Mammary epithelial cell (primary cell): ENCODE measurements at regions of chr12 and their contacts with region 1.

Region 1: DNA sequence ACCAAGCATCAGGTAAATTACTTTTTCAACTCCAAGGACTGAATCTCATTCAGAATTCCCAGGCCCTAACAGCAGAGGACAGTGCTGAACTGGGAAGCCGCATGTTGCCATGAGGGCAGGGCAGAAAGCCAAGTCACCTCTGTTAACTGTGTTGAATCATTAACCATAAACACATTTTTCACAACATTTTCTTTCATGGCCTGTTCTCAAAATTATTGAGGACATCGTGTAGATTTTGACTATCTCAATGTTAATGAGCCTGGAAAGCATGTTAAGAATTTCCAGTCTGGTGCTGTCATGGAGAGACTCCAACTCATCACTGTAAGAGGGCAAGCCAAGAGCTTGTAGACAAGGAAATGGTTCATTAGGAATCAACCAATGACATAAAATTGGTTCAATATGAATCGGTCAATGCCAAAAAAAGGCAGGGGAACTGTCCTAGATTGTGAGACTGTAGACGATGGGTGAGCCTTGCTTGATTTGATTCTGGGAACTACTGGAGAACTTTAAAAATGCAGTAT is 33.7 kb downstream of the CPM start:
- DNase-seq: peak; percentile 67
- H3K4me3 ChIP-seq: no peak overlapping the region
- H3K27ac ChIP-seq: no peak overlapping the region
- H3K4me1 ChIP-seq: no peaks in the 10 kb centered on the region
- H3K27me3 ChIP-seq: no peaks in the 10 kb centered on the region
- CTCF ChIP-seq: peak; percentile 63 to 96

Region 2: GRCh38 chr12:68865399-68866164 is 33.7 kb before region 1 on chr12:
- CTCF ChIA-PET with region 1: no interaction called
- dilution Hi-C with region 1: no loop called
- in situ Hi-C with region 1: no loop called
- intact Hi-C with region 1: loop called (anchors 2 kb)
- DNase-seq: no peak
- H3K4me3 ChIP-seq: no peak overlapping the region
- H3K27ac ChIP-seq: no peak overlapping the region
- H3K4me1 ChIP-seq: peaks cover 6% of the 10 kb centered on the region
- H3K27me3 ChIP-seq: no peaks in the 10 kb centered on the region
- CTCF ChIP-seq: no peak

Region 3: DNA sequence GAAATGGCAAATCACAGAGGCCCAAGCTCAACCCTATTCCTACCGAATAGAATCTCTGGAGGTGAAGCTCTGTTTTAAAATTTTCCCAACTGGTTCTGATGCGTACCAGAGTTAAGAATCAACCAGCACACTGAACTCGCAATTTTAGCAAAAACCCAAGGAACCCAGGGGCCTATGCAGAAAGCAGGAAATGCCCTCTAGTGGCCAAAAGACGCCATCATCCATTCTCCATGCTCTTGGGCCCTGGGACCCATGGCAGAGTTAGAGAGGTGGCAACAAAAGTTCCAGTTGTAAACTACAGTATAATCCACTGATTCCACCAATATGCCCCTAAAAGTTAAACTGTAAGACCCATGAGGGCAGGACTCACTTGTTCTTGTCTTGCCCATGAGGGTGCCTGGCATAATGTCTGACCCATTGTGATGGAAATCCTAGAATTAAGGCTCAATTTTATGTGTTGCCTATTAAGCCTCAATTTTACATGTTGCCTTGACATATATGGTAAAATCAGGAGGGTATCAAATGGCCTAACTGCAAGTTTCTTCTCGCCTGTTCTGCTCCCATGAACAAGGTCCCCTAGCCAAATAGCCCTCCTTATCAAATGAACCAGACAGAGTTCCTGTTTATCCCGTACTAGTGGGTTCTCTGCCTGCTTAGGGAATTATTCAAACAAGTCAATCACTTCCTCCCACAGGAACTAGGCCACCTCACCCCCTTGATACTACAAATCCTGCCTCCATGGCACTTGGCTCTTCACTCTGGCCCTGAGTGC is 171.2 kb after region 1 on chr12:
- CTCF ChIA-PET with region 1: no interaction called
- dilution Hi-C with region 1: no loop called
- in situ Hi-C with region 1: loop called in 1 of 2 experiments (anchors 10 kb)
- intact Hi-C with region 1: loop called (anchors 1 kb)
- DNase-seq: peak; percentile 50
- H3K4me3 ChIP-seq: no peak overlapping the region
- H3K27ac ChIP-seq: no peak overlapping the region
- H3K4me1 ChIP-seq: peaks cover 10% of the 10 kb centered on the region
- H3K27me3 ChIP-seq: peaks cover 3% of the 10 kb centered on the region
- CTCF ChIP-seq: peak; percentile 91 to 94

Region 4: DNA sequence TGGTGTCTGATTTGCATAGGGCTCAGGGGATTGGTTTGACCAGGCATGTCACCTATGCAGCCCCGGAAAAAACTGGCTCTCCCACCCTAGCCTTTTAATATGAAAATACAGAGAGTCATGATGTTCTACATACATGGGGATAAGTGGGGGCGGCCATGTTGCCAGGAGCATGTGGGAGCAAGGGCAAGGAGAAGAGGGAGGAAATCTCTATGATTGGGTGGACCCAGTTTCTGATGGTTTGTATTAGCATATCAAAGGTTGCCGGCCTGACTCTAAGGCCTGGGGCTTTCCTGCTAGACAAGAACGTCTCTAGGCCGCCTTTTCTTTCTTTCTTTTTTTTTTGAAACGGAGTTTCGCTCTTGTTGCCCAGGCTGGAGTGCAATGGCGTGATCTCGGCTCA is 216.6 kb after region 1 on chr12:
- CTCF ChIA-PET with region 1: no interaction called
- dilution Hi-C with region 1: loop called (anchors 10 kb)
- in situ Hi-C with region 1: no loop called
- intact Hi-C with region 1: no loop called
- DNase-seq: no peak
- H3K4me3 ChIP-seq: no peak overlapping the region
- H3K27ac ChIP-seq: no peak overlapping the region
- H3K4me1 ChIP-seq: no peaks in the 10 kb centered on the region
- H3K27me3 ChIP-seq: peaks cover 4% of the 10 kb centered on the region
- CTCF ChIP-seq: no peak

Region 5: DNA sequence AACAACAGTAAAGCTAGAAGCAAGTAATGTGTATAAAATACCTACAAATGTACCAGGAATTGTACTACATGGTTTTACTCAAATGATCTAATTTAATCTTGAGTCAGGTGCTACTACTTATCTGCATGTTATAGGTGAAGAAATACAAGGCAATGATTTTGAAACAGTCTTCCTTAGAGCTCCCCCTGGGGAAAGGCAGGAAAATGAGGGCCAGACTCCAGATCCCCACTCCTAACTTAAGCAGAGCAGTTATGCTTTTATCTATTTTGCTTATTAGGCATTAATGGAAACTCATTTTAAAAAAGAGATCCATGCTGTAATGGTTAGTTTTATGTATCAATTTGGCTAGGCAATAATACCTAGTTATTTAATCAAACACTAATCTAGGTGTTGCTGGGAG is 230.8 kb after region 1 on chr12:
- CTCF ChIA-PET with region 1: interaction called, 4 read pairs
- dilution Hi-C with region 1: no loop called
- in situ Hi-C with region 1: no loop called
- intact Hi-C with region 1: loop called (anchors 1 kb)
- DNase-seq: no peak
- H3K4me3 ChIP-seq: no peak overlapping the region
- H3K27ac ChIP-seq: no peak overlapping the region
- H3K4me1 ChIP-seq: no peaks in the 10 kb centered on the region
- H3K27me3 ChIP-seq: no peaks in the 10 kb centered on the region
- CTCF ChIP-seq: peak; percentile 22 to 41

Region 6: GRCh38 chr12:69239352-69239921 is 340.1 kb after region 1 on chr12 and contains the start of gene CPSF6:
- CTCF ChIA-PET with region 1: no interaction called
- dilution Hi-C with region 1: no loop called
- in situ Hi-C with region 1: no loop called
- intact Hi-C with region 1: loop called (anchors 10 kb)
- DNase-seq: peak; percentile 91
- H3K4me3 ChIP-seq: peak within 1 kb of the TSS; percentile 71 to 100 (median 86)
- H3K27ac ChIP-seq: peak within 1 kb of the TSS; percentile 88
- H3K4me1 ChIP-seq: peaks cover 12% of the 10 kb centered on the region
- H3K27me3 ChIP-seq: no peaks in the 10 kb centered on the region
- CTCF ChIP-seq: no peak
- total RNA-seq, gene CPSF6: 21.7 to 56.7 TPM